ENCODE measurements at regions of chr13 and their contacts with region 1.

Region 1: GRCh38 chr13:75372517-75372916 is 109.5 kb downstream of the TBC1D4 start:
- DNase-seq: no peak
- H3K4me3 ChIP-seq: no peak overlapping the region
- CTCF ChIP-seq: peak; percentile 39

Region 2: GRCh38 chr13:75357576-75358289 is 14.8 kb before region 1 on chr13:
- CTCF ChIA-PET with region 1: interaction called, 29 read pairs
- POLR2A ChIA-PET with region 1: no interaction called
- DNase-seq: no peak
- H3K4me3 ChIP-seq: no peak overlapping the region
- CTCF ChIP-seq: peak; percentile 66

Region 3: GRCh38 chr13:75402787-75403186 is 30.3 kb after region 1 on chr13:
- CTCF ChIA-PET with region 1: interaction called, 12 read pairs
- POLR2A ChIA-PET with region 1: no interaction called
- DNase-seq: no peak
- H3K4me3 ChIP-seq: no peak overlapping the region
- CTCF ChIP-seq: no peak

Region 4: GRCh38 chr13:75432045-75432444 is 59.5 kb after region 1 on chr13:
- CTCF ChIA-PET with region 1: interaction called, 11 read pairs
- POLR2A ChIA-PET with region 1: no interaction called
- DNase-seq: no peak
- H3K4me3 ChIP-seq: no peak overlapping the region
- CTCF ChIP-seq: no peak

Region 5: GRCh38 chr13:75537401-75538365 is 165.2 kb after region 1 on chr13 and contains the start of gene COMMD6:
- CTCF ChIA-PET with region 1: interaction called, 56 read pairs
- POLR2A ChIA-PET with region 1: no interaction called
- DNase-seq: peak; percentile 85
- H3K4me3 ChIP-seq: peak within 1 kb of the TSS; percentile 78
- CTCF ChIP-seq: peak; percentile 51

Measured in AG04449 (cell line).